ENCODE measurements at regions of chr1 and their contacts with region 1.

Region 1: GRCh38 chr1:101288491-101288944 is 51.7 kb downstream of the S1PR1 start:
- DNase-seq: peak; percentile 88
- ATAC-seq: peak; percentile 90
- H3K4me3 ChIP-seq: peak overlapping the region in 1 of 3 experiments; percentile 6; a peak in 1 of 6 replicates
- H3K27ac ChIP-seq: no peak overlapping the region
- H3K4me1 ChIP-seq: peaks cover 51% of the 10 kb centered on the region
- H3K27me3 ChIP-seq: no peaks in the 10 kb centered on the region
- CTCF ChIP-seq: peak; percentile 89
- EP300 ChIP-seq: peak in 1 of 2 experiments; percentile 55; a peak in 2 of 4 replicates
- POLR2A ChIP-seq: no peak
- RAD21 ChIP-seq: peak; percentile 85

Region 2: GRCh38 chr1:100423832-100424337 is 864.6 kb before region 1 on chr1:
- CTCF ChIA-PET with region 1: no interaction called
- POLR2A ChIA-PET with region 1: no interaction called
- in situ Hi-C with region 1: no loop called
- intact Hi-C with region 1: no loop called
- DNase-seq: no peak
- ATAC-seq: no peak
- H3K4me3 ChIP-seq: no peak overlapping the region
- H3K27ac ChIP-seq: no peak overlapping the region
- H3K4me1 ChIP-seq: no peaks in the 10 kb centered on the region
- H3K27me3 ChIP-seq: no peaks in the 10 kb centered on the region
- CTCF ChIP-seq: no peak
- EP300 ChIP-seq: no peak
- POLR2A ChIP-seq: no peak
- RAD21 ChIP-seq: no peak

Region 3: GRCh38 chr1:100921109-100921706 is 367.3 kb before region 1 on chr1:
- CTCF ChIA-PET with region 1: interaction called, 12 read pairs
- POLR2A ChIA-PET with region 1: interaction called, 3 read pairs
- in situ Hi-C with region 1: loop called (anchors 5 kb)
- intact Hi-C with region 1: loop called (anchors 1 kb)
- DNase-seq: peak; percentile 35
- ATAC-seq: no peak
- H3K4me3 ChIP-seq: no peak overlapping the region
- H3K27ac ChIP-seq: no peak overlapping the region
- H3K4me1 ChIP-seq: peaks cover 8% of the 10 kb centered on the region
- H3K27me3 ChIP-seq: no peaks in the 10 kb centered on the region
- CTCF ChIP-seq: peak; percentile 58
- EP300 ChIP-seq: no peak
- POLR2A ChIP-seq: no peak
- RAD21 ChIP-seq: peak; percentile 16; the same call in 1 of the 2 replicates

Region 4: DNA sequence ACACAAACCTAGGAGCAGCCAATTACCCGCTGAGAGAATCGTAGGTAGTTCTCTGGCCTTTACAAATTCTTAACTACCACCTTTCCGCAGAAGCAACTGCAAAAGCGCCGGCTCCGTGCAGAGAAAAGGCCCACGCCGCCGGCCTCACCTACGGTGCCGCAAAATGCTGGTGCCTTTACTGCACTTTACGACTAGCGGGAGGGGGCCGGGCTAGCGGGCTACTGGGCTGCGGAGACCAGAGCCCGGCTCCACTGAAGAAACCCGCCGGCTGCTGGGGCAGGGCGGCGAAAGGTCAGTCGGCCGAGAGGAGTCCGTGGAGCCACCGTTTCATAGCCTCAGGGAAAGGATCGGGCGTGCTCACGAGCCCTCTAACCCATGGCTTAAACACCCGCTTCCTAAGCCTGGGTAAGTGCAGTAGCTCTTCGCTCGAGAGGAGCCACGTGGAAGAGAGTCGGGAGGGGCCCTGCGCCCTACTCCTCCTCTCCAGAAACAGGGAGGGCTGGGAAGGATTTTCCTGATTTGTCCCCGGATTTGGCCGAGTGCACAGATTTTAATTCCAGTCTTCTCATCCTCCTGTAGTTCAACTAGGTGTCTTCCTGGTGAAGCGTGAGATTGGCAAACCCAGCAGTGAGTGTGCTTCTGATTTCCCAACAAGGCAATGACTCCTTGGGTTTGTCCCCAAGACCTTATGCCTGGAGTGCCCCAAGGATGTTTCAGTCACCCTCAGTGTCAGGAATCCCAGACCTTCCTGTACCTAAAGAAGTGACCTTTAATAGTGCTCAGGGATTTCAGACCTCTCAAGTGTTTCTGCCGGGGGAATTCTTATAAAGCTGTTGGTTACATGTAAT is 262.6 kb before region 1 on chr1 and contains the start of gene DPH5:
- CTCF ChIA-PET with region 1: no interaction called
- POLR2A ChIA-PET with region 1: interaction called, 3 read pairs
- in situ Hi-C with region 1: no loop called
- intact Hi-C with region 1: loop called (anchors 5 kb)
- DNase-seq: peak; percentile 82
- ATAC-seq: peak; percentile 97
- H3K4me3 ChIP-seq: peak within 1 kb of the TSS; percentile 78 to 90 (median 83)
- H3K27ac ChIP-seq: peak within 1 kb of the TSS; percentile 81
- H3K4me1 ChIP-seq: peaks cover 38% of the 10 kb centered on the region
- H3K27me3 ChIP-seq: peaks cover 0 to 5% of the 10 kb centered on the region in 2 experiments; a peak in 1 of 5 replicates
- CTCF ChIP-seq: no peak
- EP300 ChIP-seq: peak in 1 of 2 experiments; percentile 49; a peak in 2 of 4 replicates
- POLR2A ChIP-seq: peak; percentile 92 to 95
- RAD21 ChIP-seq: peak; percentile 36
- total RNA-seq, gene DPH5: 53.2 and 71.9 TPM in 2 replicates

Region 5: GRCh38 chr1:101136739-101137138 is 151.8 kb before region 1 on chr1:
- CTCF ChIA-PET with region 1: no interaction called
- POLR2A ChIA-PET with region 1: no interaction called
- in situ Hi-C with region 1: no loop called
- intact Hi-C with region 1: loop called (anchors 2 kb)
- DNase-seq: peak; percentile 73
- ATAC-seq: peak; percentile 85
- H3K4me3 ChIP-seq: peak overlapping the region in 1 of 3 experiments; percentile 30; a peak in 2 of 6 replicates
- H3K27ac ChIP-seq: peak overlapping the region; percentile 71
- H3K4me1 ChIP-seq: peaks cover 59% of the 10 kb centered on the region
- H3K27me3 ChIP-seq: 0 out of 5 replicates have a peak, but pooled peaks cover 0 to 1% of the 10 kb centered on the region in 2 experiments
- CTCF ChIP-seq: peak; percentile 64
- EP300 ChIP-seq: peak in 1 of 2 experiments; percentile 83; a peak in 2 of 4 replicates
- POLR2A ChIP-seq: no peak
- RAD21 ChIP-seq: no peak

Region 6: DNA sequence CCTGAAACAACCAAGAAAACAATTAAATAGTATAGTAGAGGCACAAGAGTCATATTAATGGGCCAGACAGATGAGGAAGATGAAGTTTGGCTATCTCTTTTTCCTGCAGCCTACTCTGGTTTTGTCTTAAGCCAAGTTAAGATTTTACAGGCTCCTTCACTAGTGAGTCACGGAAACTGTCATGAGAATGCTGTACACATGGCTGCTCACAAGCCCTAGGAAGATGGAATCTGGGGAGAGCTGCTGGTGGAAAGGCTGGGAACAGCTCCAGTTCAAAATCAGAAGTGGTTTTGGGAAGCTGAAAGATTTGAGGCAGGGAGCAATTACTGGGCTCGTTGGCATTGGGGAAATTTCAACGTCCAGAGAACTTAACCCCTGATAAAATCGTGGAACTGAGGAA is 98.1 kb before region 1 on chr1:
- CTCF ChIA-PET with region 1: no interaction called
- POLR2A ChIA-PET with region 1: no interaction called
- in situ Hi-C with region 1: no loop called
- intact Hi-C with region 1: no loop called
- DNase-seq: no peak
- ATAC-seq: no peak
- H3K4me3 ChIP-seq: no peak overlapping the region
- H3K27ac ChIP-seq: no peak overlapping the region
- H3K4me1 ChIP-seq: peaks cover 15% of the 10 kb centered on the region
- H3K27me3 ChIP-seq: no peaks in the 10 kb centered on the region
- CTCF ChIP-seq: no peak
- EP300 ChIP-seq: no peak
- POLR2A ChIP-seq: no peak
- RAD21 ChIP-seq: no peak

Region 7: GRCh38 chr1:101238681-101239094 is 49.8 kb before region 1 on chr1:
- CTCF ChIA-PET with region 1: no interaction called
- POLR2A ChIA-PET with region 1: no interaction called
- in situ Hi-C with region 1: no loop called
- intact Hi-C with region 1: loop called (anchors 1 kb)
- DNase-seq: peak; percentile 54
- ATAC-seq: peak; percentile 88
- H3K4me3 ChIP-seq: no peak overlapping the region
- H3K27ac ChIP-seq: no peak overlapping the region
- H3K4me1 ChIP-seq: peaks cover 28% of the 10 kb centered on the region
- H3K27me3 ChIP-seq: peaks cover 9 to 38% of the 10 kb centered on the region in 2 experiments
- CTCF ChIP-seq: peak; percentile 91
- EP300 ChIP-seq: no peak
- POLR2A ChIP-seq: no peak
- RAD21 ChIP-seq: peak; percentile 76

Region 8: GRCh38 chr1:101257500-101258325 is 30.8 kb before region 1 on chr1:
- CTCF ChIA-PET with region 1: no interaction called
- POLR2A ChIA-PET with region 1: no interaction called
- in situ Hi-C with region 1: no loop called
- intact Hi-C with region 1: loop called (anchors 1 kb)
- DNase-seq: peak; percentile 91
- ATAC-seq: peak; percentile 99
- H3K4me3 ChIP-seq: peak overlapping the region; percentile 16 to 46 (median 21); a peak in 5 of 6 replicates
- H3K27ac ChIP-seq: peak overlapping the region; percentile 90
- H3K4me1 ChIP-seq: peaks cover 30% of the 10 kb centered on the region
- H3K27me3 ChIP-seq: no peaks in the 10 kb centered on the region
- CTCF ChIP-seq: 0 out of 2 replicates have a peak, but pooled peaks have one; percentile 9
- EP300 ChIP-seq: peak in 1 of 2 experiments; percentile 75; a peak in 2 of 4 replicates
- POLR2A ChIP-seq: no peak
- RAD21 ChIP-seq: no peak

Measured in HepG2 (cell line).